Heart left ventricle (tissue), 16 donors: ENCODE measurements at regions of chr5 and their contacts with region 1.

Region 1: GRCh38 chr5:178793151-178793550 is 62.7 kb upstream of the ZNF354A start:
- DNase-seq: no peak
- ATAC-seq: no peak
- H3K4me3 ChIP-seq: no peak overlapping the region
- H3K27ac ChIP-seq: no peak overlapping the region
- H3K4me1 ChIP-seq: no peaks in the 10 kb centered on the region
- H3K27me3 ChIP-seq: peaks cover 0 to 11% (median 0%) of the 10 kb centered on the region in 9 donors
- CTCF ChIP-seq: peak in 6 of 12 donors; percentile 8 to 33 (median 25)
- POLR2A ChIP-seq: no peak

Region 2: DNA sequence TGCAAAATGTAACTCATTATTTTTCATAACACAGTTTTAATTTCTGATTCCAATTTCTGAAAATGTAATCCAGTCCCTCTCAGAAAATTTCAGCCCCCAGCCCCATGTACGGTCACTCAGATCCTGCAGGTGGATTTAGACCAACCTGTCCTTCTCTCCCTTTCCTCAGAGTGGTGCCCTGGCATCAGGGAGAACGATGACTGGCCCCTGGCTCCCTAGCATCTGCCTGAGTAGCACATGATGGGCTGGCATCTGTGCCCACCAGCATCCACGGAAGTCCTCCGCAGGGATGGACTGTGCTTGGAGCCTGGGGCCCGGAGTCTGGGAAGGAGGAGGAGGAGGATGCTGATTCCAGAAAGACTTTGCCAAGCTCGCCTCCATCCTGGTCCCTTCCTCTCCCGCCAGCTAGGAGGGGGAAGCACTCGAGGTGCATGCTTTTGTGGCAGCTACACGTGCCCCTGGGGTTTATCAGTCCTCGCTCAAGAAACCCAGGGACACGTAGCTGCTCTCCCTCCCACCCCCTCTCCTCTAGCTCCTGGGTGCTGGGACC is 702.8 kb after region 1 on chr5:
- intact Hi-C with region 1: loop called in 1 of 10 experiments (anchors 5 kb)
- DNase-seq: no peak
- ATAC-seq: no peak
- H3K4me3 ChIP-seq: no peak overlapping the region
- H3K27ac ChIP-seq: no peak overlapping the region
- H3K4me1 ChIP-seq: no peaks in the 10 kb centered on the region
- H3K27me3 ChIP-seq: peaks cover 0 to 11% (median 0%) of the 10 kb centered on the region in 9 donors
- CTCF ChIP-seq: no peak
- POLR2A ChIP-seq: no peak